A673 (cell line): ENCODE measurements at regions of chr7 and their contacts with region 1.

Region 1: DNA sequence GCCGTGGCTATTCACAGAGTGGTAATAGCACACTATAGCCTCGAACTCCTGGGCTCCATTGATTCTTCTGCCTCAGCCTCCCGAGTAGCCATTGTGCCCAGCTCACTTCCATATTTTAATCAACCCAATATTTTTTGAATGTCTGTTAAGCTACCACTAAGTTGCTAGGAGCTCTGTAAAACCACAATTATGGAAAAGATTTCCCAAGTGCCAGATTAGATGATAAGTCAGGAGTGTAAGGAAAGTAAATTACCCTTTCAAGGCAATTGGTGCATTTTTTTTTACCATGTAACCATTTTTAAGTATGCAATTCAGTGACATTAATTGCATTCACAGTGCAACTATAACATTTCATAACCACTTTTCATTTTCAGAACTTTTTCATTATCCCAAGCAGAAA is 87.5 kb upstream of the GATAD1 start:
- DNase-seq: no peak
- H3K4me3 ChIP-seq: no peak overlapping the region
- H3K27ac ChIP-seq: no peak overlapping the region
- H3K4me1 ChIP-seq: no peaks in the 10 kb centered on the region
- H3K27me3 ChIP-seq: no peaks in the 10 kb centered on the region
- CTCF ChIP-seq: no peak

Region 2: DNA sequence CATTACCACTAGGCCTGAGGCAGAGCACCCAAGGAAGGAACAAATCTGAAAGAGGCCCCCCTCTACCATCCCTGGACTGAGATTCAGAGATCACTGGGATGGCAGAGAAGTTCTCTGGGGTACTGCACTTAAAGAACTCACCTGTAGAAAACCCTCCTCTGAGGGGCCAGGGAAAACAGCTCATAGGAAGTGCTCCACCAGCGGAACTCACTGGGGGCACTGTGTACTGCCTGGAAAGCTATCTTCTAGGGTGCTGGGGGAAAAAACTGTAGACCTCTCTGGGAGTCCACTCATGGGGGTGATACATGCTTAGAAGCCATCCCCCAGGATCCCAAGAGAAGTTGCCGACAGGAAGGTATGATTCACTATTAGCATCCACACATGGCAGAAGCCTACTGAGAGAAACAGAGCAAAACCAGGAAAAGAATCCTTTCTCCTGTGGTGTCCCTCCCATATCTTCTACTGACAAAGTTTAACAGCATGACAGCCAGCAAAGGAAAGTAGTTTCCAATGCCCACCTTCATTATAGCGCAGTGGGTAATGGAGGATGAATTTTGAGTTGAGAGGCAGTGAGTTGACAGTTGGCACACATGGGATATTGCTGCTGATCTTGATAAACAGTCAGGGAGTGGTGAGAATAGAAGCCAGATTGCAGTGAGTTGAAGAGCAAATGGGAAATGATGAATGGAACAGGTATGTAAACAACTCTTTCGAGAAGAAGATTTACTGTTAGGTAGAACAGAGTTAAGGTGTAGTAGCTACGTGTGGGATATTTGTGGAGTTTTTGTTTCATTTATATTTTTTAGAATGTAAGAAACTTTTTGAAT is 93.2 kb before region 1 on chr7:
- CTCF ChIA-PET with region 1: no interaction called
- POLR2A ChIA-PET with region 1: no interaction called
- intact Hi-C with region 1: no loop called
- DNase-seq: no peak
- H3K4me3 ChIP-seq: no peak overlapping the region
- H3K27ac ChIP-seq: no peak overlapping the region
- H3K4me1 ChIP-seq: no peaks in the 10 kb centered on the region
- H3K27me3 ChIP-seq: no peaks in the 10 kb centered on the region
- CTCF ChIP-seq: no peak

Region 3: GRCh38 chr7:93530701-93531100 is 1170.9 kb after region 1 on chr7:
- CTCF ChIA-PET with region 1: interaction called, 14 read pairs
- POLR2A ChIA-PET with region 1: no interaction called
- intact Hi-C with region 1: no loop called
- DNase-seq: no peak
- H3K4me3 ChIP-seq: no peak overlapping the region
- H3K27ac ChIP-seq: no peak overlapping the region
- H3K4me1 ChIP-seq: no peaks in the 10 kb centered on the region
- H3K27me3 ChIP-seq: no peaks in the 10 kb centered on the region
- CTCF ChIP-seq: no peak